ENCODE measurements at regions of chr7 and their contacts with region 1.

Region 1: GRCh38 chr7:104231054-104232046 is 23.5 kb upstream of the ORC5 start:
- DNase-seq: peak in 1 of 2 donors; percentile 67
- H3K4me3 ChIP-seq: no peak overlapping the region
- H3K27ac ChIP-seq: no peak overlapping the region
- H3K4me1 ChIP-seq: no peaks in the 10 kb centered on the region
- H3K27me3 ChIP-seq: no peaks in the 10 kb centered on the region
- CTCF ChIP-seq: peak; percentile 39 to 86 (median 81)

Region 2: DNA sequence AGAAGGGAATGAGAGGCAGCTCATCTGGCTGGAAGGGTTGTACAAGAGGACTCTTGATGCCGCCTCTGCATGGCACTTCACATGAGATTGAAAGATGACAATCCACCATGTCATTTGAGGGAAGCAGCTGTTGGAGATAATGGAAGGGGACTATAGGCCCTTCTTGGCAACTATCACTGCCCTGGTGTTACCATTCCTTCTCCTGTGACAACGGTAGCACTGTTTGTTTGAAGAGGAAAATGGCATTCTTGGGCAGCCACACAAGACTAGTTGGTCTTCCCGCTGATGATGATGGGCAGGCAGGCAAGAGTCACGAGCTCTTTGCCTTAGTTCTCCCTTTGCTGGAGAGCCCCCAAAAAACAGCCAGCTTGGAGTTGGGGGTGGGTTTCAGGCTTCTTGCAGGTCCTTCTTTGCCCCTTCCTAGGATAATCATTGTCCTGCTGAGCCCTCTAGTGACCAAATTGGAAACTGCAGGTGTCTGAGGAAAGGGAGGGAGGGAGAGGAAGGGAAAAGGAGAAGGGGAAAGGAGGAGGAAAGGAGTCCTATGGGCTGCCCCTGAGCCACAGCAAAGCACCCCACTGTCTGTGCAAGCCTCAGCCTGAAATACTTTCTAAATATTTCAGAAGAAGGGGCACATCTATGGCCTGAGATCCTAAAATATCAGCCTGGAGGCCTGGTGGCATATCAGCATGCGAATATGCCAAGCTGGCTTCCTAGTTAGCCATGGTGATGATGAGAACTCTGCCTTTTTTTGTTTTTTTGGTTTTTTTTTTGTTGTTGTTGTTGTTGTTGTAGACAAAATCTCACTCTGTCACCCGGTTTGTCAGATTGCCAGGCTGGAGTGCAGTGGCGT is 617.0 kb after region 1 on chr7:
- intact Hi-C with region 1: loop called (anchors 5 kb)
- DNase-seq: no peak
- H3K4me3 ChIP-seq: no peak overlapping the region
- H3K27ac ChIP-seq: no peak overlapping the region
- H3K4me1 ChIP-seq: no peaks in the 10 kb centered on the region
- H3K27me3 ChIP-seq: no peaks in the 10 kb centered on the region
- CTCF ChIP-seq: peak; percentile 54 to 87 (median 77)

Measured in ascending aorta (tissue), 2 donors.